GM10248 (cell line): ENCODE measurements at regions of chr17 and their contacts with region 1.

Region 1: GRCh38 chr17:50200457-50201275 is 765 bp downstream of the COL1A1 start:
- DNase-seq: peak; percentile 89
- CTCF ChIP-seq: peak; percentile 89

Region 2: DNA sequence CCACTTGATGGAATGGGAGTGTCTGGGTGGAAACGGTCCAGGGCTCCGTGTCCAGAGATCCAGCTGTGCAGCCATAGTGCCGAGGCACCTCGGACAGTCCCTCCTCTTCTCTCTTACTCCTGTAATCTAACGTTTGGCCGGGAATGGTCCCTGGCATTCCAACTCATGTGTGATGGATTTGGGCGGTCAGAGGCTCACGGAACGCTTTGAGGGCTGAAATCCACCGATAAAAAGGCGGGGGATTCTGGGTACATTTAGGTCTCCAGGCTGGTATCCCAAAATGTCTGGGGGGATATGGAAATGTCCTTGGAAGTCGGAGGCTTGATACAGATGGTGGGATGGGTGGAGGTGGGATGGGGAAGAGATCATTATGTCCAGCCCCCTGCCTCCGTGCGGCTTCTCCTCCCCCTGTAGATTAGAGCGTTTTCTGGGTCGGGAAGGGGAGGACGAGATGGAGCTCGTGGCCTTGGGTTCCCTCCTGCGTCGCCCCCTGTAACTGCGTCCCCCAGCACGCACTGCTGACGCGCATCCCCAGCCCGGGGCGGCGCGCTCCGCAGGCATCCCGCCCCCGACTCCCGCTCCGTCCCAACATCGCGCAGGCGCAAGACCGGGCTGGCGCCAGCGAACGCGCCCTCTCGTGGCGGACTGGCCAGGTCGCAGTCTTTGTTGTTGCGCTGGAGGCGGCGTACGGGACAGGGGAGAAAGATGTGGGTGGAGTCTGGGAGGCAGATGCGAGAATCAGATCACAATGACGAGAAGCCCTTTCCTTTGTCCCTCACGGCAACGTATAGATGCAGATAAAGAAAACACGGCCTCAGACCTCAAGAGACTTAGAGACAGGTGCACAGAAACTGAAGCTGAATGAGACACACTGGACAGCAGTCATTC is 39.4 kb before region 1 on chr17:
- CTCF ChIA-PET with region 1: interaction called, 30 read pairs
- POLR2A ChIA-PET with region 1: no interaction called
- DNase-seq: peak; percentile 99
- CTCF ChIP-seq: peak; percentile 93

Region 3: DNA sequence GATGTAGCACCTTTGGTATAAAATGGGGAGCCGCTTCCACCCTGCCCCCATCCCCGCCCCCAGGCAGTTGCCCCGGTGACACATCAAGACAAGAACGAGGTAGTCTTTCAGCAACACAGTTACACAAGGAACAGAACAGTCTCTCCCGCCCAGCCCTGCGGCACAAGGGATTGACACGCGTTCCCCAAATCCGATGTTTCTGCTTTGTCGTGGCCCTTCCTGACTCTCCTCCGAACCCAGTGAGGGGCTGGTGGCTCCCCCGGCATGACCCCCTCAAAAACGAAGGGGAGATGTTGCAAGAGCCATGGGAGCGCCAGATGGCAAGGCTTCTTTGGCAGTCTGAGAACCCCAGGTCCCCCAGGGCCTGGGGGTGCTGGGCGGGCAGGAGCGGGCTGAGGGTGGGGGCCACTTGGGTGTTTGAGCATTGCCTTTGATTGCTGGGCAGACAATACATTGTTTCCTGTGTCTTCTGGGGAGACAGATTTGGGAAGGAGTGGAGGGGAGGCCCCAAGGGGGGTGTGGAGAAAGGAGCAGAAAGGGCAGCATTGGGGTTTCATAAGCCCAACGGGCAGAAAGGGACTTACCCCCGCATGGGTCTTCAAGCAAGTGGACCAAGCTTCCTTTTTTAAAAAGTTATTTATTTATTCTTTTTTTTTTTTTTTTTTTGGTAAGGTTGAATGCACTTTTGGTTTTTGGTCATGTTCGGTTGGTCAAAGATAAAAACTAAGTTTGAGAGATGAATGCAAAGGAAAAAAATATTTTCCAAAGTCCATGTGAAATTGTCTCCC is 15.9 kb before region 1 on chr17:
- CTCF ChIA-PET with region 1: interaction called, 33 read pairs
- POLR2A ChIA-PET with region 1: no interaction called
- DNase-seq: peak; percentile 51
- CTCF ChIP-seq: no peak

Region 4: DNA sequence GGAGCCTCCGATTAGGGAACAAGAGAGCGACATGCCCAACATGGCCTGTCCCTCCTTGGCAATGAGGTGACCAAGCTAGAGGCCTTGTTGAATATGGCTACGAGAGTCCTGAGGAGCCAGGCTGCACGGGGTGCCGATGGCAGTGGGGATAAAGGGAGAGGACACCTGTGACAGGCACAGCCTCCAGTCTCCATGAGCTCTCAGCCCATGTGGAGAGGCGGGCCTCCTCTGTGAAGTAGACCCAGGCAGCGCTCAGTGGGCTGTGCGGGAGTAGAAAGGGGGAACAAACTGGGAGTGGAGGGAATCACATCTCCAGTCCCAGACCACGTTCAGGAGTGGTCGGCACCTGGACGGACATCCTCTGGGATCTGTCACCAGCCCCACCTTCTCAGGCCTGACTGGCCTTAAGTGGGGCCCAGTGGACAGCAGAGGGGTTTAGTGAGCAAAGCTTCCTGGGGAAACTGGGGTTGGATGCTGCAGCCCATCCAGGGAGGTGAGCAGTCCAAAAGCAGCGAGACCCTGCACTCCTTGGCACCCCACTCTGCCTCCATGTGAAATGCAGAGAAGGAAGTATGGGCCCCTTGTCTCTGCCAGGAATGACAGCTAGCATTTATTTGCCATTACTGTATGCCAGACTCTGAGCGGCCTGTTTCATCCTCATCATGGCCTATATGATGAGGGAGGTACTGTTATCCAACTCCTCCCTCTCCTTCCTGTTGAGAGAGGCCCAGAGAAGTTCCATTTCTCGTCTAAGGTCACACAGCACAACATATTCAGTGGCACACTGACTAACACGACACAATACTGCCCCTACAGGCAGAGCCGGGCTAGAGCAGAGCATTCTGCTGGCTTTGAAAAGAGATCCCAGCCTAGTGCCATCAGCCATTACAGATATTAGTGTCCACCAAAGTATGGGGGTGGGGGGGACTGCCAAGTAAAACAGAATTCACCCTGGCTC is 69.1 kb after region 1 on chr17:
- CTCF ChIA-PET with region 1: interaction called, 128 read pairs
- POLR2A ChIA-PET with region 1: no interaction called
- DNase-seq: peak; percentile 74
- CTCF ChIP-seq: peak; percentile 73

Region 5: DNA sequence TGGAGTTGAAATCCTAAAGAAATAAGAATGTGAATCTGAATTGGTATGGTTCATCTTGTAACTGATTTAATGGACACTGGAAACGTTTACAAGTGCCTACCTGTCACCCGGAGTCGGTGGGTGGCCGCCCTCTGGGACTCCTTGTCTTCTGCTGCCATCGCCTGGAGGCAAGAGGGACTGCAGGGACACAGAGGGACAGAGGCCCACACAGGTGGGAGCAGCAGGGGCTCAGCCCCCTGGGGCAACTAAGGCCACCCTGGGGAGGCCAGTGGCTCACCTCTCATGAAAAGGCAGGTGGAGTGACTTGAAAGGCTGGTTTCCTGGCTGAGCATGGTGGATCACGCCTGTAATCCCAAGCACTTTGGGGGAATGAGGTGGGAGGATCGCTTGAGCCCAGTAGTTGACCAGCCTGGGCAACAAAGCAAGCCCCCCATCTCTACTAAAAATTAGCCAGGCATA is 96.8 kb after region 1 on chr17:
- CTCF ChIA-PET with region 1: interaction called, 324 read pairs
- POLR2A ChIA-PET with region 1: interaction called, 5 read pairs
- DNase-seq: peak; percentile 82
- CTCF ChIP-seq: peak; percentile 98

Region 6: GRCh38 chr17:50361561-50362480 is 161.2 kb after region 1 on chr17:
- CTCF ChIA-PET with region 1: interaction called, 17 read pairs
- POLR2A ChIA-PET with region 1: no interaction called
- DNase-seq: peak; percentile 85
- CTCF ChIP-seq: peak; percentile 66

Region 7: DNA sequence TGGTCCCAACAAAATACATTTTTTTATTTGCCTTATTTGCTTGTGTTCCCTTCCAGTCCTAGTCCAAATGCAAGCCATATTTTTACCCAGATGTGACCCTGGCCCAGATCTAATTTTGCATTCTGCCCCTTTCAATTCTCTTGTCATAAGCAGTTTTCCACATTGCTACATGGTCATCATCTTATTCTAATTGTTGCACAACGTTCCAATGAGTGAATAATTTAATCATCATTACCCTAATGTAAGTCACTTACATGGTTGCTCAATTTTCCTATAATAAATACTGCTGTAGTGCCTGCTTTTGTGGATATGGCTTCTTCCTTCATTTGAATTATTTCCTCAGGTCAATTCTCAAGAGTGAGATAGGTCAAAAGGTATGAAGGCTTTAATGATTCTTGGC is 290.8 kb after region 1 on chr17:
- CTCF ChIA-PET with region 1: no interaction called
- POLR2A ChIA-PET with region 1: no interaction called
- DNase-seq: no peak
- CTCF ChIP-seq: no peak